PC-9 (cell line): ENCODE measurements at regions of chr20 and their contacts with region 1.

Region 1: DNA sequence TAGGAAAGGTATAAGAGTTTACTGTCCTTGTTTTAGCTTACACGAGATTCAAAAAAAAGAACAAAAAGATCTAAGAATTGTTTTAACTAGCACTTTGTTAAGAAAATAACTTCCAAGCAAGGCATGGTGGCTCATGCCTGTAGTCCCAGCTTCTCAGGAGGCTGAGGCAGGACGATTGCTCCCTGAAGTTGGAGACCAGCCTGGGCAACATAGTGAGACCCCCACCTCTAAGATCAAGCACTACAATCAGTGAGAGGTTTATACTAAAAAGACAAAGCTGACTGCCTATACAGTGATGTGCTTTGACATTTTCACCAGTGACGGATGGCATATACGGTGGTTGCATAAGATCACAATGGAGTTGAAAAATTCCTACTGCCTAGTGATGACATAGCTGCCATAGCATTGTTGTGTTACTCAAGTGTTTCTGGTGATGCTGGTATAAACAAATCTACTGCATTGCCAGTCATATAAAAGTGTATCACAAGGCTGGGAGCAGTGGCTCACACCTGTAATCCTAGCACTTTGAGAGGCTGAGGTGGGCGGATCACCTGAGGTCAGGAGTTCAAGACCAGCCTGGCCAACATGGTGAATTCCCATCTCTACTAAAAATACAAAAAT is 68.6 kb downstream of the B4GALT5 start:
- DNase-seq: peak in 1 of 2 experiments; percentile 45
- H3K4me3 ChIP-seq: no peak overlapping the region
- H3K27ac ChIP-seq: peak overlapping the region; percentile 2; the same call in 1 of the 2 replicates
- H3K4me1 ChIP-seq: 0 out of 2 replicates have a peak, but pooled peaks cover 7% of the 10 kb centered on the region
- H3K27me3 ChIP-seq: no peaks in the 10 kb centered on the region
- CTCF ChIP-seq: no peak

Region 2: DNA sequence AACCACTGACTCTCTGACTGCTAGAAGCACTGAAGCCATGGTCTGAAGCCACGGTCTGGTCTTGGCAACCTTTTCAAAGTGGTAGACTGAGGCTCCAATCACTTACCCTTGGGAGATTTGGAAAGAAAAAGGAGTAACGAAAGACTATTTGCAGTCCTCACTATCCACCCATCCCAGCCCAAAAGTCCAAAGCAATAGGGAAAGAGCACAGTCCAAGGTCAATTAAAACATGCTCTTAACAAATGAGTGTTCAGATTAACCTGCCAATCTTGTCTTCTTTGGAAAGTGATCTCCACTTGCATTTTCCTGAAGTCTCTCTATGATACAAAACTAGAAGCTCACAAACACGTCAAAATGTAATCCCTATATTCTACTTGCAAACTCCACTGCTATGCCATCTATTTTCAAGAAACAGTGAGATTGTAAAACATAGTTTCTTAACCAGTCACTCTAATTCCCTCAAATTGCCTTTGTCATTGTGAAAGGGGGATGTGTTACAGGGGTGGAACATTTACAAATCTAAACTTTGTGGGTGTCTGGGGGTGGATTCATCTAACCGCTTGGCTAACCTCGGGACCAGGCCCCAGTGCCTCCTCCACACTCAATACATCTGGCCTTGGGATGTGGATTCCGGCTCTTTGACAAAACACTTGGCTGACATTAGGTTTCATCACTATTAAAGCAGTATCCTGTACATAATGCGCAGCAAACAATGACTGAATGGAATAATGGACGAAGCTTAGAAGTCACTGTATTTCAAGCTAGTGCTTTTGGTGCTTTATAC is 12.2 kb after region 1 on chr20:
- CTCF ChIA-PET with region 1: no interaction called
- POLR2A ChIA-PET with region 1: interaction called, 11 read pairs
- intact Hi-C with region 1: no loop called
- DNase-seq: no peak
- H3K4me3 ChIP-seq: no peak overlapping the region
- H3K27ac ChIP-seq: peak overlapping the region; percentile 39
- H3K4me1 ChIP-seq: peaks cover 17% of the 10 kb centered on the region
- H3K27me3 ChIP-seq: no peaks in the 10 kb centered on the region
- CTCF ChIP-seq: no peak

Region 3: DNA sequence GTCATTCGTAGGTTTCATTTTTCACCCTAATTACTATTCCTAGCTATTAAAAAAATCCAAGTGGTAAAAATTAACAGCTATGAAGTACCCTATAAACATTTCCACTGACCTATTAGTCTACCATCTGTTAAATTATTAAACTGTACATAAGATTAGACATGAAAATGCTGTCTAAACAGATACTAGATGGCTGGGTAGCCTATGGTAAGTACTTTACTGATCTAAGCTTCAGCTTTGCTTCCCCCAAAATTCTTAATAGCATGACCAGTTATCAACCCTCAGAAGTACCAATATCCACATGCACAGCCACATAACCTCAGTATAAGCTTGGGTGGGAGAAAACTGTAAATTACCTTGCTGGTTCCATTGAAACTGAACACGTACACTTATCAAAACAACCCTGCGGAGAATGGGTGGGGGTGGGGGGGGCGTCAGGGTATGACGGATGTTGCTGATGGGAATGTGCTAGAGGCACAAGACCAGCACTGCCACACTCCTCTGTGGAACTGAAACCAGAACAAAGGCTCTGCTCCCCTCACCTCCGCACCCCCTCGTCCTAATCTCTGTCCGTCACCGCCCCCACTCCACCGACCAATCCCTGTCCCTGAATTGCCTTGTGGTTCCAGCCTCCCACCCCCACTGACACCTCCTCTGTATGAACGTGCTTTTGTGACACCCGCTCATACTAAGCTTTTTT is 23.2 kb after region 1 on chr20:
- CTCF ChIA-PET with region 1: no interaction called
- POLR2A ChIA-PET with region 1: no interaction called
- intact Hi-C with region 1: no loop called
- DNase-seq: no peak
- H3K4me3 ChIP-seq: no peak overlapping the region
- H3K27ac ChIP-seq: peak overlapping the region; percentile 15; the same call in 1 of the 2 replicates
- H3K4me1 ChIP-seq: peaks cover 52% of the 10 kb centered on the region
- H3K27me3 ChIP-seq: no peaks in the 10 kb centered on the region
- CTCF ChIP-seq: no peak